Posterior vena cava (tissue), 2 donors: ENCODE measurements at regions of chr6 and their contacts with region 1.

Region 1: DNA sequence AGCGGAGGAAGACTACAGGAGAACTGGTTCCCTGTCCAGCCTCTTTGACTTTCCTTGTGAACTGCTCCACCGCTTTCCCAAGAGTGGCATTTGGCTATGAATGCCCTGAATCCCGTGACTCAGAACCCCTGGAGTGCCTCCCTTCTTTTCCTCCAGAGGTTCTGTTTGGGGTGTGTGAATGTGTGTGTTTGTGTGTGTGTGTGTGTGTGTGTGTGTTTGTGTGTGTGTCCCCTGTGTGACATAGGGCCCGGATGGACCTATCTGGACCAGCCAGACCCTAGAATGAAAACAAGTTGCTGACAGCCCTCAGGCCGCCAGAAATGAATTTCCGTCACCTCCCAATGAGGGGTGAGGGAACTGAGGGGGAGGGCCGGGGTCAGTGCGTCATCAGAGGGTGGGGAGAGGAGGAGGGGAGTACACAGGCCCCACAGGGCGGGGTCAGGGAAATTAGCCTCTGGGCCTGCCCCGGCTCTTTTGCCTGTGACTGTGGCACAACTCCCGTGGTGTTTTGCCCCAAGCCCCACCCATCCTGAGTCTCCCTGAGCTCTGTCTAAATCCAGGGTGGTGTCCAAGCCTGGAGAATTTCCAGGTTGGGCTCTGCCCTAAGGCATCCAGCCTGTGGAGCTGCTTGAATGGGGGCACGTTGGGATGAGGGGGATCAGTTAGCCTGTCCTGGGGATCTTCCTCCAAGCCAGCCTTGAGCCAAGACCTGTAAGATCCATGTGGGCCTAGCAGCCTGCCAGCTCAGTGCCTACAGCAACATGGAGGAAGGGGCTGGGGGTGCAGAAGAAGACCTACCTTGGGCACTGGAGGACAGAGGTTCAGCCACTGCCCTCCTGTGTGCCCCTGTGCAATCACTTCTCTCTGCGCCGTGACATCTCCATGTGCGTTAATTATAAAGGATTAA is 15.2 kb upstream of the MRPS18A start:
- DNase-seq: peak; percentile 97

Region 2: GRCh38 chr6:43150051-43150751 is 552.6 kb before region 1 on chr6:
- intact Hi-C with region 1: loop called in 1 of 2 experiments (anchors 10 kb)
- DNase-seq: no peak

Region 3: DNA sequence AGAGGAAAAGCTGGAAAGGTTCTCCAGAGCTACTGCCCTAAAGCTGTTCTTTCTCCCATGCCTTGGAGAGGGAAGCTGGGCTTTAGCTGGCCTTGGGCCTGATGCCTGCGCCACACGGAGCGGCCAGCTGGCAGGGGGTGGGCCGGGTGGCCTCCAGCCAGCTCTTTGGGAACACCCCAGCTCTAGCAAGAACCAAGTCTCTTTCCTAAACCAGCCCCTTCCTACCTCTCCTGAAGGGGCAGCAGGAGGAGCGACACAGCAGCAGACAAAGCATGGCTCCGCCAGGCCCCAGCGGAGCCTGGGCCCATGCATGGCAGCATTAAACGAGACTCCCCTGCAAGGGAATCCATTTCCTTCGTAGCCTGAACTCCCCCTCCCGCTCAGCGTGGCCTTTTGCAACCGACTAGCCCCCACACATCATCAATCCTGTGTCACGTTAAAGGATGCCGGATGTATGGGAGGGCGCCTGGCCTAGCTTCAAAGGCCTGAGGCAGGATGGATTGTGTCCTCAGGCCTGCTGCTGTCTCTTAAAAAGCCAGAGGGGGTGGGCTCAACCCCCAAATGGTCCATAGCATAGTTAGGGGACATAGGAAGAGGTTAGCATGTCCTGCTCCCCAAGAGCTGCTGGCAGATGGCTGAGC is 29.2 kb before region 1 on chr6:
- intact Hi-C with region 1: loop called in 1 of 2 experiments (anchors 1 kb)
- DNase-seq: peak; percentile 69